GM18951 (cell line): ENCODE measurements at regions of chr6 and their contacts with region 1.

Region 1: GRCh38 chr6:32697031-32697430 is 30.6 kb upstream of the HLA-DQB1 start:
- POLR2A ChIP-seq: no peak

Region 2: DNA sequence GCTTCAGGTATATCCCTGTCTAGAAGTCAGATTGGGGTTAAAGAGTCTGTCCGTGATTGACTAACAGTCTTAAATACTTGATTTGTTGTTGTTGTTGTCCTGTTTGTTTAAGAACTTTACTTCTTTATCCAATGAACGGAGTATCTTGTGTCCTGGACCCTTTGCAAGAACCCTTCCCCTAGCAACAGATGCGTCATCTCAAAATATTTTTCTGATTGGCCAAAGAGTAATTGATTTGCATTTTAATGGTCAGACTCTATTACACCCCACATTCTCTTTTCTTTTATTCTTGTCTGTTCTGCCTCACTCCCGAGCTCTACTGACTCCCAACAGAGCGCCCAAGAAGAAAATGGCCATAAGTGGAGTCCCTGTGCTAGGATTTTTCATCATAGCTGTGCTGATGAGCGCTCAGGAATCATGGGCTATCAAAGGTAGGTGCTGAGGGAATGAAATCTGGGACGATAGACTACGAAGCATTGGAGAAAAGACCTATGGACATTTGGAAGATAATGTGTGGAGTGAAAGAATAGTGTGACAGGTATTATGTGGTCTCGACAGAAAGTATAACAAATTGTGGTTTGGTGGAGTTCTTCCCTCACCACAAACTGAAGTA is 257.3 kb before region 1 on chr6 and contains the start of gene HLA-DRA:
- in situ Hi-C with region 1: loop called (anchors 5 kb)
- POLR2A ChIP-seq: peak; percentile 89